CD8-positive, alpha-beta T cell (primary cell): ENCODE measurements at regions of chr1 and their contacts with region 1.

Region 1: DNA sequence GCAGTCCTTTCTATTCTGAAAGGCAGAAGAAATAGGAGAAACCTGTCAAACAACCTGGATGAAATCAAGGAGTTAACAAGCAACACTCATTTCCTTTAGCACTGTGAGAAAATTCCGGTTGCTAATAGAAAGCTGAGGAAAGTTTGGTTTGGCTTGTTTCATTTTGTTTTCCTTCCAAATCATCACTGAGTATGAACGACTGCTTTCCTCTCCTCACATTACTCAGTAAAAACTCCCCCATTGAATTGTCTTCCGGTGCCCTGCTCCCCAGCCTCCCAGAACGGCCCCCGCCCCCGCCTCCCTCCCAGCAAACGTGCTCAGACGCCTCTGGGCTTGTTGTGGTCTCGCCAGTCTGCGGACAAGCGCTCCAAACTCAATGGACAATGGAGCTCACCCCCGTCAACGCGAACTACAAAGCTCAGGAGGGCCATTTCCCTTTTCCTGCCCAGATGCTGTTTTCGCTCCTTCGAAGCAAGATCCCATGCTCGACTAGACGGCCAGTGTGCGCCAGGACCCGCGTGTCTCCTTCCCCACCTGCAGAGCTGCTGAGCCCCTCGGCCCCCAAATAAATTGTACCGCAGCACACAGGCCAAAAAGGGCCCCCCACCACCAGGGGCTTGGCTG is 747 bp downstream of the STX6 start:
- DNase-seq: peak in 8 of 9 experiments; percentile 42 to 82 (median 59)
- ATAC-seq: peak; percentile 37
- H3K4me3 ChIP-seq: peak overlapping the region; percentile 84 to 91
- H3K4me3 Mint-ChIP-seq: peak overlapping the region; percentile 95
- H3K27ac ChIP-seq: peak overlapping the region; percentile 71 to 84
- H3K27ac Mint-ChIP-seq: peak overlapping the region; percentile 96
- H3K4me1 ChIP-seq: peaks cover 31% of the 10 kb centered on the region
- H3K4me1 Mint-ChIP-seq: peaks cover 44% of the 10 kb centered on the region
- H3K27me3 ChIP-seq: no peaks in the 10 kb centered on the region
- H3K27me3 Mint-ChIP-seq: no peaks in the 10 kb centered on the region
- CTCF ChIP-seq: no peak

Region 2: GRCh38 chr1:179025125-179025974 is 1996.6 kb before region 1 on chr1 and contains the start of gene FAM20B:
- CTCF ChIA-PET with region 1: no interaction called
- POLR2A ChIA-PET with region 1: no interaction called
- intact Hi-C with region 1: loop called in 1 of 2 experiments (anchors 5 kb)
- DNase-seq: peak; percentile 82 to 94 (median 90)
- ATAC-seq: peak; percentile 85
- H3K4me3 ChIP-seq: peak within 1 kb of the TSS; percentile 70 to 81
- H3K4me3 Mint-ChIP-seq: peak within 1 kb of the TSS; percentile 87
- H3K27ac ChIP-seq: peak within 1 kb of the TSS; percentile 77 to 83
- H3K27ac Mint-ChIP-seq: peak within 1 kb of the TSS; percentile 88
- H3K4me1 ChIP-seq: peaks cover 25% of the 10 kb centered on the region
- H3K4me1 Mint-ChIP-seq: peaks cover 40% of the 10 kb centered on the region
- H3K27me3 ChIP-seq: no peaks in the 10 kb centered on the region
- H3K27me3 Mint-ChIP-seq: no peaks in the 10 kb centered on the region
- CTCF ChIP-seq: no peak
- total RNA-seq, gene FAM20B: 11.1 to 11.2 TPM

Region 3: GRCh38 chr1:179954493-179955297 is 1067.2 kb before region 1 on chr1 and contains the start of gene CEP350:
- CTCF ChIA-PET with region 1: no interaction called
- POLR2A ChIA-PET with region 1: no interaction called
- intact Hi-C with region 1: loop called (anchors 5 to 10 kb)
- DNase-seq: peak; percentile 94 to 100 (median 97)
- ATAC-seq: peak; percentile 86
- H3K4me3 ChIP-seq: peak within 1 kb of the TSS; percentile 69 to 85
- H3K4me3 Mint-ChIP-seq: peak within 1 kb of the TSS; percentile 85
- H3K27ac ChIP-seq: peak within 1 kb of the TSS; percentile 77 to 88
- H3K27ac Mint-ChIP-seq: peak within 1 kb of the TSS; percentile 95
- H3K4me1 ChIP-seq: peaks cover 35% of the 10 kb centered on the region
- H3K4me1 Mint-ChIP-seq: peaks cover 59% of the 10 kb centered on the region
- H3K27me3 ChIP-seq: no peaks in the 10 kb centered on the region
- H3K27me3 Mint-ChIP-seq: no peaks in the 10 kb centered on the region
- CTCF ChIP-seq: no peak
- total RNA-seq, gene CEP350: 37.6 to 42.7 TPM

Region 4: GRCh38 chr1:180502360-180503273 is 519.3 kb before region 1 on chr1 and contains the start of gene ACBD6:
- CTCF ChIA-PET with region 1: no interaction called
- POLR2A ChIA-PET with region 1: interaction called, 4 read pairs
- intact Hi-C with region 1: loop called (anchors 2 to 5 kb)
- DNase-seq: peak; percentile 73 to 92 (median 84)
- ATAC-seq: peak; percentile 89
- H3K4me3 ChIP-seq: peak within 1 kb of the TSS; percentile 96 to 97
- H3K4me3 Mint-ChIP-seq: peak within 1 kb of the TSS; percentile 96
- H3K27ac ChIP-seq: peak within 1 kb of the TSS; percentile 75 to 76
- H3K27ac Mint-ChIP-seq: peak within 1 kb of the TSS; percentile 98
- H3K4me1 ChIP-seq: peaks cover 27% of the 10 kb centered on the region
- H3K4me1 Mint-ChIP-seq: peaks cover 47% of the 10 kb centered on the region
- H3K27me3 ChIP-seq: no peaks in the 10 kb centered on the region
- H3K27me3 Mint-ChIP-seq: no peaks in the 10 kb centered on the region
- CTCF ChIP-seq: no peak
- total RNA-seq, gene ACBD6: 23.4 to 24.6 TPM

Region 5: GRCh38 chr1:180981596-180982387 is 40.1 kb before region 1 on chr1:
- CTCF ChIA-PET with region 1: no interaction called
- POLR2A ChIA-PET with region 1: no interaction called
- intact Hi-C with region 1: loop called in 1 of 2 experiments (anchors 5 kb)
- DNase-seq: peak in 8 of 9 experiments; percentile 7 to 70 (median 42)
- ATAC-seq: peak; percentile 91
- H3K4me3 ChIP-seq: no peak overlapping the region
- H3K4me3 Mint-ChIP-seq: no peak overlapping the region
- H3K27ac ChIP-seq: no peak overlapping the region
- H3K27ac Mint-ChIP-seq: peak overlapping the region; percentile 49
- H3K4me1 ChIP-seq: peaks cover 15% of the 10 kb centered on the region
- H3K4me1 Mint-ChIP-seq: peaks cover 27% of the 10 kb centered on the region
- H3K27me3 ChIP-seq: no peaks in the 10 kb centered on the region
- H3K27me3 Mint-ChIP-seq: no peaks in the 10 kb centered on the region
- CTCF ChIP-seq: no peak

Region 6: GRCh38 chr1:181088079-181089016 is 66.4 kb after region 1 on chr1 and contains the start of gene IER5:
- CTCF ChIA-PET with region 1: interaction called, 3 read pairs
- POLR2A ChIA-PET with region 1: interaction called, 4 read pairs
- intact Hi-C with region 1: loop called in 1 of 2 experiments (anchors 1 kb)
- DNase-seq: peak; percentile 93 to 97 (median 95)
- ATAC-seq: peak; percentile 71
- H3K4me3 ChIP-seq: peak within 1 kb of the TSS; percentile 70 to 97
- H3K4me3 Mint-ChIP-seq: peak within 1 kb of the TSS; percentile 99
- H3K27ac ChIP-seq: peak within 1 kb of the TSS; percentile 89 to 99
- H3K27ac Mint-ChIP-seq: peak within 1 kb of the TSS; percentile 99
- H3K4me1 ChIP-seq: peaks cover 20% of the 10 kb centered on the region
- H3K4me1 Mint-ChIP-seq: peaks cover 44% of the 10 kb centered on the region
- H3K27me3 ChIP-seq: no peaks in the 10 kb centered on the region
- H3K27me3 Mint-ChIP-seq: no peaks in the 10 kb centered on the region
- CTCF ChIP-seq: no peak
- total RNA-seq, gene IER5: 74.7 to 76.6 TPM

Region 7: GRCh38 chr1:181173761-181174447 is 152.0 kb after region 1 on chr1:
- CTCF ChIA-PET with region 1: no interaction called
- POLR2A ChIA-PET with region 1: no interaction called
- intact Hi-C with region 1: no loop called
- DNase-seq: no peak
- ATAC-seq: no peak
- H3K4me3 ChIP-seq: no peak overlapping the region
- H3K4me3 Mint-ChIP-seq: no peak overlapping the region
- H3K27ac ChIP-seq: no peak overlapping the region
- H3K27ac Mint-ChIP-seq: no peak overlapping the region
- H3K4me1 ChIP-seq: no peaks in the 10 kb centered on the region
- H3K4me1 Mint-ChIP-seq: peaks cover 2% of the 10 kb centered on the region
- H3K27me3 ChIP-seq: no peaks in the 10 kb centered on the region
- H3K27me3 Mint-ChIP-seq: no peaks in the 10 kb centered on the region
- CTCF ChIP-seq: no peak

Region 8: GRCh38 chr1:182029379-182030331 is 1007.7 kb after region 1 on chr1:
- CTCF ChIA-PET with region 1: no interaction called
- POLR2A ChIA-PET with region 1: no interaction called
- intact Hi-C with region 1: loop called (anchors 1 to 5 kb)
- DNase-seq: peak; percentile 96 to 99 (median 98)
- ATAC-seq: peak; percentile 93
- H3K4me3 ChIP-seq: peak overlapping the region; percentile 76 to 77
- H3K4me3 Mint-ChIP-seq: peak overlapping the region; percentile 93
- H3K27ac ChIP-seq: peak overlapping the region; percentile 68 to 84
- H3K27ac Mint-ChIP-seq: peak overlapping the region; percentile 98
- H3K4me1 ChIP-seq: peaks cover 16% of the 10 kb centered on the region
- H3K4me1 Mint-ChIP-seq: peaks cover 18% of the 10 kb centered on the region
- H3K27me3 ChIP-seq: no peaks in the 10 kb centered on the region
- H3K27me3 Mint-ChIP-seq: no peaks in the 10 kb centered on the region
- CTCF ChIP-seq: no peak